ENCODE measurements at regions of chr4 and their contacts with region 1.

Region 1: DNA sequence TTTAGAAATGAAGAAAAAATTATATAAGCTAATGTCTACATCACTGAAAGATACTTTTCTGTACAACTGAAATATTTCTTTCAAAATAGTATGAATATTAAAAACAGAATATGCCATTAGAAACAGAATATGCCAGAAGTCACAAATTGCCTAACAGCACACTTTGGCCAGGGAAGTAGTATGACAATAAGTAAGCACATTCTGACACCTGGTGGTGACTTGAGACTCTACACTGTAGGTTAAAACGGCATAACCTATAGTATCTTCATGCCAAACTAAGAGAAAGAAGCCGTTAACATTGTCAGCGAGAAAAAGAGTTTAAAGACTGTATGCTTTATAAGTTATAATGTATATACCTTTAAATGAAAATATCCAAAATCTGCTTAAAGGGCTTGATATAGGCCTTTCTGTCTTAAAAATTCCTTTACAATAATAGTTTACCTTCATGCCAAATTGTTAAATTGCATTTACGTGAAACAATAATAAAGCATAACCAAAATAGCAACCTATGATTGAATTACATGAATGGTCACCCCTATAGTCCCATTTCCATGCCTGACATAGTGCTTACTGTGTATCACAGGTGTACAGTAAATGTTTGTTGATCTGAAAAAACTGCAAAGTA is 32.8 kb downstream of the FAM13A start:
- DNase-seq: peak in 12 of 14 experiments; percentile 15 to 86 (median 42)
- ATAC-seq: peak; percentile 100
- H3K4me3 ChIP-seq: no peak overlapping the region
- H3K4me3 Mint-ChIP-seq: no peak overlapping the region
- H3K27ac ChIP-seq: no peak overlapping the region
- H3K27ac Mint-ChIP-seq: no peak overlapping the region
- H3K4me1 ChIP-seq: peaks cover 3% of the 10 kb centered on the region
- H3K4me1 Mint-ChIP-seq: peaks cover 2% of the 10 kb centered on the region
- H3K27me3 ChIP-seq: no peaks in the 10 kb centered on the region
- H3K27me3 Mint-ChIP-seq: no peaks in the 10 kb centered on the region
- CTCF ChIP-seq: peak; percentile 83

Region 2: GRCh38 chr4:88672987-88673386 is 351.2 kb before region 1 on chr4:
- CTCF ChIA-PET with region 1: interaction called, 3 read pairs
- POLR2A ChIA-PET with region 1: no interaction called
- intact Hi-C with region 1: loop called (anchors 1 to 5 kb)
- DNase-seq: peak in 9 of 14 experiments; percentile 1 to 54 (median 20)
- ATAC-seq: peak; percentile 76
- H3K4me3 ChIP-seq: no peak overlapping the region
- H3K4me3 Mint-ChIP-seq: no peak overlapping the region
- H3K27ac ChIP-seq: no peak overlapping the region
- H3K27ac Mint-ChIP-seq: no peak overlapping the region
- H3K4me1 ChIP-seq: no peaks in the 10 kb centered on the region
- H3K4me1 Mint-ChIP-seq: peaks cover 3% of the 10 kb centered on the region
- H3K27me3 ChIP-seq: no peaks in the 10 kb centered on the region
- H3K27me3 Mint-ChIP-seq: no peaks in the 10 kb centered on the region
- CTCF ChIP-seq: peak; percentile 64

Measured in CD4-positive, alpha-beta T cell (primary cell).